ENCODE measurements at regions of chr1 and their contacts with region 1.

Region 1: DNA sequence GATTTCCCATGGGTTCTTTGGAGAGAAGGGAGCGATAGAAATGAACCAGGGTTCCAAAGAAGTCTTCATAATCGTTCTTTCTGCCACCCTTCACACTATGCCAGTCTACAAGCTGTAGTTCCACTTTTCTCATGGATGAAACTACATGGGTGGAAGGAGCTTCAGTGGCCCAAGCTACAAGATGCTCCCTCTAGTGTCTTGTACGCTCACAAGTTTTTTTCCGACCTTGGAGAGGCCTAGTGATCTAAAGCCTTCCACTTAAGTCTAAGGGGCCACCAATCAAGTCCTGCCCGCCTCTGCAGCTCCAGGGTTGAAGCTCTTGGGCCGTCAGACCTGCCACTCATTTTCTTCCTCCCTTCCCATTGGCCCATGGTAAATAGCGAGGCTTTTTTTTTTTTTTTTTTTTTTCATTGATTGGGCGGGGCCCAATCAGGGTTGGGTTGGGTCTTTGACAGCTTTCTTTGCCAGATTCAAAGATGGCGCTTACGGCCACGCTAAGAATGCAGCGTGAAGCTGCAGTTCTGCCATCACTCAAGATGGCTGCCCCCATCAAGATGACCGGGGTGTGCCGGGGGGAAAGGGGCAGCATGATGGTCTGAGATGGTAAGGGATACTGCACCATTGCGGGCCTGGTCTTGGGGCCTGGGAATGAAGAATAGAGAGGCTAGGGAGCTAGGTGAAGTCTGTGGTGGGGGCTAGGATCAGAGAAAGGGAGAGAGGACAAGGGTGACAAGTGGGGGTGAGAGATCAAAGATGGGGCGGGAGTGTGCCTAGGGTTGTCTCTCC is at the start of gene TOMM40L:
- DNase-seq: peak; percentile 89
- H3K4me3 Mint-ChIP-seq: peak within 1 kb of the TSS; percentile 100
- H3K27ac Mint-ChIP-seq: peak within 1 kb of the TSS; percentile 100
- H3K4me1 Mint-ChIP-seq: peaks cover 23% of the 10 kb centered on the region
- H3K27me3 Mint-ChIP-seq: no peaks in the 10 kb centered on the region
- total RNA-seq, gene TOMM40L: 22.7 and 24.9 TPM in 2 replicates

Region 2: GRCh38 chr1:161177112-161177935 is 48.4 kb before region 1 on chr1 and contains the start of gene B4GALT3:
- intact Hi-C with region 1: loop called (anchors 1 kb)
- DNase-seq: peak; percentile 92
- H3K4me3 Mint-ChIP-seq: peak within 1 kb of the TSS; percentile 99
- H3K27ac Mint-ChIP-seq: peak within 1 kb of the TSS; percentile 97
- H3K4me1 Mint-ChIP-seq: peaks cover 48% of the 10 kb centered on the region
- H3K27me3 Mint-ChIP-seq: no peaks in the 10 kb centered on the region
- total RNA-seq, gene B4GALT3: 57.5 and 57.6 TPM in 2 replicates

Region 3: DNA sequence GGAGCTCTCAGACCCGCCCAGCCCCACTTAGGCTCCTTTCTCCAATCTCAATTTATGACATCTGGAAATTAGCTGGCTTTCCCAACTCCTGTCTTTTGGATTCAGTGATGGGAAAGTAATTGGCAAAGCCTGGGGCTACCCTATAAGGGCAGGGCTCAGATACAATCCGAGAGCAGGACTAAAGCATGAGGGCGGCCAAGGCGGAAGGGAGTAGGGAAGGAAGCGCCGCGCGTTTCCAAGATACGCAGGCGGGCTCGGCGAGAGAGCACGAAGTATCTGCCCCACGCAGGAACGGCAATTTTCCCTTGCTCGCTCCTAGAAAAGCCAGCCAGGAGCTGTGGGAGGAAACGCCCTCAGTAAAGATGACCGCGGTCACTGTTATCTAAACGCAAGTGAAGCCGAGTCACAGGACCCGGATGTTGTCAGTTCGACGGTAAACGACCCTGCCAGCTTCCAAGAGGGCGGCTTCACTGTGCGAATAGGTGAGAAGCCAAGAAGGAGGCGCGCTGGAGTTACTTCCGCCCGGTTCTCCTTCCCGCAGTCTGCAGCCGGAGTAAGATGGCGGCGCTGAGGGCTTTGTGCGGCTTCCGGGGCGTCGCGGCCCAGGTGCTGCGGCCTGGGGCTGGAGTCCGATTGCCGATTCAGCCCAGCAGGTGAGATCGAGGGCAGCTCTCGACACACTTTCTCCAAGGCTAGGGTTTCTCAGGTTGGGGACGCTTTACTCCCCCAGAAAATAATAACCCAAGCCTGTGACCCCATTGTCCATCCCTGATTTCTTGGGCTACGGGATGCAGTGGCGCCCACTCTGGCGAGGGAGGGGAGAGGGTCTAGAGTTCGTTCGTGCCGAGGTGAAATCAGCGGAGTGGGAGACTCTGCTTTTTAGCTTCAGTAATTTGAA is 23.6 kb before region 1 on chr1 and contains the start of gene NDUFS2:
- intact Hi-C with region 1: loop called (anchors 1 kb)
- DNase-seq: peak; percentile 93
- H3K4me3 Mint-ChIP-seq: peak within 1 kb of the TSS; percentile 94
- H3K27ac Mint-ChIP-seq: peak within 1 kb of the TSS; percentile 95
- H3K4me1 Mint-ChIP-seq: peaks cover 41% of the 10 kb centered on the region
- H3K27me3 Mint-ChIP-seq: no peaks in the 10 kb centered on the region
- total RNA-seq, gene NDUFS2: 79.0 and 91.5 TPM in 2 replicates

Region 4: GRCh38 chr1:161290779-161291178 is 65.1 kb after region 1 on chr1:
- intact Hi-C with region 1: loop called (anchors 1 kb)
- DNase-seq: no peak
- H3K4me3 Mint-ChIP-seq: no peak overlapping the region
- H3K27ac Mint-ChIP-seq: no peak overlapping the region
- H3K4me1 Mint-ChIP-seq: no peaks in the 10 kb centered on the region
- H3K27me3 Mint-ChIP-seq: no peaks in the 10 kb centered on the region

Region 5: DNA sequence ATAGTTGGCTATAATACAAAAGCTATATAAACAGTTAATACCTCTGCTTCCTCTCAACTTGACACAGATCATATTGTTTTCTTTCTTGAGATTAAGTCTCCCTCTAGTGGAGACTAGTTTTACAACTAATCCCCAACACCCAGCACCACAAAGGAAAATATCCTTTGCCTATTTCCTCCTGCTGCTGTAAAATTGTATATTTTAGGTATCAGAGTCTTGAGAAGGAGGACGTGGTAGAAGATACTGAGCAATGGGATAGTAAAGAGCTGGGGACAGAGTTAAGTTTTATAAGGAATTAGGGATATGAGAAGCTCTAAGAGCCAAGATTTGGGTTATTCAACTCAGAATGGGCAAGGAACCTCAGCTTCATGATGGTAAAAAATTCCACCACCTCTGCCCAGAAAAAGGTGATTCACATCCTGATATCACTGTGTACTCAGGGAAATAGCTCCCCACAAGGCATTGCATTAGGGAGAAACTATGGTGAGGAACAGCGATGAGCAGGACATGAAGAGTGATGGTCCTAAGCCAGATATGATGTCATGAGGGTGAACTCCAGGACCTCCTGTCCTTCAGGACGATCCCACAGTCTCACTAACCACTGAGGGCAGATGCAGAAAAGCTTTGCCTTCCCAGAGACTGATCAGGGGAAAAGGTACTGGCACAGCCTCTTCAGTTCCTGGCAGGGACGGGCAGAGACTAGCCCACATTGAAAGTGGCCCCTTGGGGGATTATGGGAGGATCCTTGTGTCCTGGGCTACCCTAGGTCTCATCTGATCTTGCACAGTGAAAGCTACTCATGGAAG is 156.7 kb after region 1 on chr1:
- intact Hi-C with region 1: loop called (anchors 1 kb)
- DNase-seq: no peak
- H3K4me3 Mint-ChIP-seq: no peak overlapping the region
- H3K27ac Mint-ChIP-seq: no peak overlapping the region
- H3K4me1 Mint-ChIP-seq: peaks cover 18% of the 10 kb centered on the region
- H3K27me3 Mint-ChIP-seq: no peaks in the 10 kb centered on the region